Naive thymus-derived CD8-positive, alpha-beta T cell (primary cell): ENCODE measurements at regions of chr1 and their contacts with region 1.

Region 1: GRCh38 chr1:234722904-234723720 is 113.1 kb upstream of the IRF2BP2 start:
- DNase-seq: peak in 5 of 10 donors; percentile 38 to 73 (median 48)
- ATAC-seq: peak; percentile 7 to 18
- H3K4me3 Mint-ChIP-seq: peak overlapping the region; percentile 72 to 89 (median 85)
- H3K27ac Mint-ChIP-seq: peak overlapping the region; percentile 93 to 100 (median 98)
- H3K4me1 Mint-ChIP-seq: peaks cover 42 to 73% (median 67%) of the 10 kb centered on the region in 4 donors
- H3K27me3 Mint-ChIP-seq: peaks cover 0 to 3% (median 0%) of the 10 kb centered on the region in 5 donors

Region 2: GRCh38 chr1:234599617-234600417 is 123.3 kb before region 1 on chr1:
- POLR2A ChIA-PET with region 1: interaction called, 26 read pairs
- DNase-seq: peak; percentile 56 to 86 (median 73)
- ATAC-seq: peak; percentile 61 to 72
- H3K4me3 Mint-ChIP-seq: peak overlapping the region; percentile 78 to 93 (median 89)
- H3K27ac Mint-ChIP-seq: peak overlapping the region; percentile 74 to 98 (median 96)
- H3K4me1 Mint-ChIP-seq: peaks cover 14 to 62% (median 46%) of the 10 kb centered on the region in 4 donors
- H3K27me3 Mint-ChIP-seq: no peaks in the 10 kb centered on the region

Region 3: GRCh38 chr1:234628089-234628488 is 95.0 kb before region 1 on chr1:
- POLR2A ChIA-PET with region 1: no interaction called
- DNase-seq: no peak
- ATAC-seq: no peak
- H3K4me3 Mint-ChIP-seq: no peak overlapping the region
- H3K27ac Mint-ChIP-seq: no peak overlapping the region
- H3K4me1 Mint-ChIP-seq: peaks cover 0 to 5% (median 0%) of the 10 kb centered on the region in 4 donors
- H3K27me3 Mint-ChIP-seq: no peaks in the 10 kb centered on the region

Region 4: DNA sequence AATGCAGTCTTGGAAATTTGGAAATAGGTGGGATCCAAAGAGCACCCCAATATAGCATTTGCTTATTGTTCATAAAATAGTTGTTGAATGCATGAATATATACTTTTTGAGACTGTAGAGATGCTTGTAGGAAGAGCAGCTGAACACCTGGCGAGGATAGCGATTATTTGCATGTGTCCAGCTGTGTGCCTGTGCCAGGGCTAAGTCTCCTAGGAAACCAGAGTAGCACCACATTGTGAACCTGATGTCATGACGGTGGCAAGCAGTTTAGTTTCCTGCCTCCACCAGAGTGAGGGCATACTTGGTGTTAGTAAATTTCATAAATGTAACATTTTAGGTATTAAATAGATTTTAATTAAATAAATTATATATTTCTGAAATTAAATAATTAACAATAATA is 75.9 kb before region 1 on chr1:
- POLR2A ChIA-PET with region 1: no interaction called
- DNase-seq: no peak
- ATAC-seq: no peak
- H3K4me3 Mint-ChIP-seq: no peak overlapping the region
- H3K27ac Mint-ChIP-seq: no peak overlapping the region
- H3K4me1 Mint-ChIP-seq: peaks cover 0 to 3% (median 0%) of the 10 kb centered on the region in 4 donors
- H3K27me3 Mint-ChIP-seq: no peaks in the 10 kb centered on the region

Region 5: DNA sequence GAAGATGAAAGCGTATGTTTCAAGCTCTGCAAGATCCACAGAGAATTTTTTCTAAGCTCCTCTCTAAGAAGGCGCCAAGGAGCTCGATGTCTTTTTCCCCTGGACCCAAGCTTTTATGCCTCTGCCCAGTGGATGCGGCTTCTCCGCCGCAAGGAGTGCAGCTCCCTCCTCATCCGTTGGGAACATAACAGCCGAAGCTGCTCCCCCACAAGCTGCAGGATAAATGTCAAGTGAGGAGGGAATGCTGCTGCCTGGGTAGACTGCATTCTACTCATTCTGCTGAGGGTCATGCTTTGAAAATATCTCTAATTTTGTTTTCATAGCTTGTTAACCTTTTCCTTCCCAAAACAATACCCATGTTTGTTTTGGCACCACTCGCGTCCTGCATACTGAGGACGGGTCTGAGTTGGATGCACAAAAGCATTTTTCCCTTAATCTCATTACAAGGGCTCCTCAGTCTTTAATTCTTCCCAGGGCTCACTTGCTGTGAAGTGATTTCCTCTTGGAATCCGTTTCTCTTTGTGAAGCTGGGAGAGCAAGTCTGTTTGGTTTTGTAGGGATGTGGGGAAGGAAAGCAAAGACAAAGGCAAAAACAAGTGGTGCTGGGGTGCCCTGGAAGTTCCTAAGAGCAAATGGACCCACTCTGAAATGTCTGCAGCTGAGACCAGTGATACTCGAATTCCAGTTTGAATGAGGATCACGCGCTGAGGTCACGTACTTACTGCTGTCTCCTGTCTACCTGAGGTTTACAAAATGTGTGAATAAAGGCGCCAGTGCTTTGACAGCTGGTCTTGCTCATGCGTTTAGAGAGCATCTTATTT is 20.9 kb after region 1 on chr1:
- POLR2A ChIA-PET with region 1: interaction called, 10 read pairs
- DNase-seq: no peak
- ATAC-seq: no peak
- H3K4me3 Mint-ChIP-seq: no peak overlapping the region
- H3K27ac Mint-ChIP-seq: peak overlapping the region in 1 of 10 donors; percentile 82
- H3K4me1 Mint-ChIP-seq: peaks cover 0 to 5% (median under 1%) of the 10 kb centered on the region in 4 donors
- H3K27me3 Mint-ChIP-seq: no peaks in the 10 kb centered on the region

Region 6: DNA sequence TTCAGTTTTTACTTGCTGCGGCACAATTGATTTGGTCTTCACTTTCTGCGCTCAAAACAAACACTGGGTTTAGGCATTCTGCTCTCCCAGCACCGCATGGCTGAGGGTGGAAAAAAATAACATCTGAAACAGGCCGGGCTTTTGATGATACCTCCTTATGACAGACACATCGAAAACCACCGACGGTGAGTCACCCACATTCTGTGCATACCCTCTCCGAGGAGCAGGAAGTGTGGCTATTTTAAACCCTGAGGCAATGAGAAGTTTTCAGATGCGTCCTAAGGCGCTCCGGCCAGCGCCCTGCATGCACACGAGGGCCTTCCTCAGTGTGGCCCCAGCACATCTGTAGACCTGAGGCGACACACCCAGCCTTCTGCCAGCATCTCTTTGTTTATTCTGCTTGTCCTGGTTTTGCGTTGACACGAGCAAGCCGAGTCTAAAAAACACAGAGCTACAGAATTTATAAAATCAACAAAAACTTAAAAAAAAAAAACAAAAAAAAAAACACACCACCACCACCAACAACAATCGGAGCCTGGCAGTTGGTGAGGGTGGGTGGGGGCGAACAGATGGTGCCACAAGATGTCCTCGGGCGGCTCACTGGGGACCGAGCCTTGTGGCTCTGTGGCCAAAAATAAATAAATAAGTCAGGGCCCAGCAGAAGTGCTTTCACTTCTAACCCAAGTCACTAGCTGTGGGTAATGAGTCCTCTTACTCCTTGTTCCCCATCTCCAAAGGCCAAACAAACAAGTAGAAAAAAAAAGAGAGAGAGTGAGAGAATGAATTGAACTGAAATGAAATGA is 49.4 kb after region 1 on chr1:
- POLR2A ChIA-PET with region 1: interaction called, 62 read pairs
- DNase-seq: peak; percentile 31 to 93 (median 77)
- ATAC-seq: peak; percentile 79 to 87
- H3K4me3 Mint-ChIP-seq: peak overlapping the region; percentile 62 to 83 (median 74)
- H3K27ac Mint-ChIP-seq: peak overlapping the region; percentile 87 to 98 (median 95)
- H3K4me1 Mint-ChIP-seq: peaks cover 38 to 57% (median 56%) of the 10 kb centered on the region in 4 donors
- H3K27me3 Mint-ChIP-seq: no peaks in the 10 kb centered on the region